Cardiac septum (tissue), 1 donor: ENCODE measurements at regions of chr12 and their contacts with region 1.

Region 1: GRCh38 chr12:64551698-64552097 is 58.6 kb upstream of the RASSF3 start:
- DNase-seq: no peak

Region 2: DNA sequence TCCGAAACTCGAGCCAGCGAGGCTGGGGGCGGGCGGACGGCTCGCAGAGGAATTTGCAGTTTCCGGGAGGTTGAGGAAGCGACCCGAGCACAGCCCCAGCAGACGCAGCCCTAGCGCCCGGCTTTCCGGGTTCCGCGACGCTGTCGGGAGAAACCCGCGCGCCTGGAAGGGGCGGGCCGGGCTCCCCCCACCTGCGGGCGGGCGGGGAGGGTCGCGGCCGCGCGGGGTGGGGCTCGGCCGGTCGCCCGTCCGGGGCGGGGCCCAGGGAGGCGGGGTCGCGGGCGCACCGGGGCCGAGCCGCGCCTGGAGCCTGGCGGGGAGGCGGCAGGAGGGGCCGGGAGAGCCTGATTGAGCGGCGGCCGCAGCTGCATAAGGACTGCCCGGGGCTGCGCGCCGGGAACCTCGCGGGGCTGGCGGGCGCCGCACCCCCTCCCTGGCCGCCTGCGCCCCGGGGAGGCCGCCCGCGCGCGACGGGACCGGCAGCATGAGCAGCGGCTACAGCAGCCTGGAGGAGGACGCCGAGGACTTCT is 58.5 kb after region 1 on chr12 and contains the start of gene RASSF3:
- intact Hi-C with region 1: loop called (anchors 5 kb)
- DNase-seq: peak; percentile 93
- total RNA-seq, gene RASSF3: 98.8 TPM

Region 3: DNA sequence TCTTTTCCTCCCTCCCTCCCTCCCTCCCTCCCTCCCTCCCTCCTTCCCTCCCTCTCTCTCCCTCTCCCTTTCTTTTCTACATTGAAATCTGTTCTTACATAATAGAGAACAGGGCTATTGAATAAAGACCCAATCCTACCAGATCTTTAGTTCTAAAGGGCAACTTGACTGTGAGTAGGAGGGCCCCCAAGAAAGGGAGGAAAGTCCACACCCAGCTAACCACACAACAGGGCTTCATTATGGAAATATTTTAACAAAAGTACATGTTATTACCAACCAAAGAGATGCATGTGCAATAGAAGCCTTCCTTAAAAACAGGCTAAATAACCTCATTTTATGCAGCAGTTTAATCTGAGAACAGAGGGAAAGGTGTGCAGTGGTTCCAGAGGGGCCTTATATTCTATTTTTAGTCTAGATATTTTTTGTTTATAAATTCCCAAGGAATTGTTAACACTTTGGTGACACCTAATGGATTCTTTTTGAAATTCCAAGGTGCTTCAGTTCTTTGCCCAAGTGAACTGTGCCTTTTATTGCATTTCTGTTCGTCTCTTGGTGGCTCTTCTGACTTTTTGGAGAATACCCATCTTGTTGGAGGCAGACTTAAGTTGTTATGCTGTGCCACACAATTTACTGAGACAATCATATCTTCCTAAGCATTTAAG is 144.5 kb after region 1 on chr12:
- intact Hi-C with region 1: loop called (anchors 1 kb)
- DNase-seq: no peak

Region 4: DNA sequence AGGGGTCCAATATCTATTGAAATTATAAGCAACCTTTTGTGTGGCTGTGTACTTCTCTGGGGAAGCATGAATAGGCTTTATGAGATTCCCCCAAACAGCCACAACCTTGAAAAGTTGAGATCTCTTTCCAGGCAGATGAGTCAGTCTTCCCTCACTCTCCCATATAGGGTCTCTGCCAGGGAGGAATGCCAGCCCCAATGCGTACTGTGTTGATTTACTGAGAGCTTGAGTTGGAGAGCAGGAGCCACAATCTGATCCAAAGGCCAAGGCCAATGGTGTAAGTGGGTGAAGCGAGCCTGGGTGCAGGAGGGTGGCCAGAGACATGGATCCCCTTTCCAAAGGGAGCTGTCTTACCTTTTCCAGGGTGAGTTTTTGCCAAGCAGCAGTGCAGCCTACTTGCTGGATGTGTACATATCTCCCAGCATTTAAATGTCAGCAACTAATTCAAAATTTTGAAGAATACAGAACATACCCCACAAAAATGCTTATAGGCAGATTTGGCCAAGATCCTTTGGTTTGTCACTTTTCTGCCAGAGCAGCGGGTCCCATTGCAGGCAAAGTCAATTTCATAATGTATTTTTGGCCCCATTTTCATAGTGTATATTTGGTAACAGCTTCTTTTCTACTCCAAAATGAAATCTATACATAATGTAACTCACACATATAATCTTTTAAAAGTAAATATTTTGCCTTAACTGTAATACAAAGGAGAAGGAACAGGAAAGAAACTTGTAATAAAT is 361.0 kb after region 1 on chr12:
- intact Hi-C with region 1: no loop called
- DNase-seq: no peak